ENCODE measurements at regions of chr2 and their contacts with region 1.

Region 1: GRCh38 chr2:16608661-16609643 is 56.7 kb downstream of the CYRIA start:
- DNase-seq: peak; percentile 60 to 99
- H3K4me3 ChIP-seq: peak overlapping the region; percentile 38 to 78 (median 66); a peak in 7 of 8 replicates
- H3K27ac ChIP-seq: no peak overlapping the region
- H3K4me1 ChIP-seq: no peaks in the 10 kb centered on the region; a peak in 1 of 7 replicates
- H3K27me3 ChIP-seq: no peaks in the 10 kb centered on the region
- CTCF ChIP-seq: peak; percentile 91 to 93 (median 91)
- EP300 ChIP-seq: no peak
- POLR2A ChIP-seq: no peak; a peak in 1 of 3 replicates
- RAD21 ChIP-seq: peak; percentile 93 to 95

Region 2: GRCh38 chr2:15636972-15637785 is 971.8 kb before region 1 on chr2:
- CTCF ChIA-PET with region 1: interaction called, 11 read pairs
- POLR2A ChIA-PET with region 1: no interaction called
- DNase-seq: peak; percentile 31 to 80
- H3K4me3 ChIP-seq: no peak overlapping the region
- H3K27ac ChIP-seq: no peak overlapping the region
- H3K4me1 ChIP-seq: no peaks in the 10 kb centered on the region; a peak in 1 of 7 replicates
- H3K27me3 ChIP-seq: no peaks in the 10 kb centered on the region
- CTCF ChIP-seq: peak; percentile 68 to 99 (median 92)
- EP300 ChIP-seq: no peak
- POLR2A ChIP-seq: 0 out of 3 replicates have a peak, but pooled peaks of 1 of the 2 experiments have one; percentile 26
- RAD21 ChIP-seq: peak; percentile 100

Region 3: GRCh38 chr2:16413285-16413684 is 195.7 kb before region 1 on chr2:
- CTCF ChIA-PET with region 1: no interaction called
- POLR2A ChIA-PET with region 1: no interaction called
- DNase-seq: no peak
- H3K4me3 ChIP-seq: no peak overlapping the region
- H3K27ac ChIP-seq: no peak overlapping the region
- H3K4me1 ChIP-seq: no peaks in the 10 kb centered on the region
- H3K27me3 ChIP-seq: peaks cover 0 to 1% (median 0%) of the 10 kb centered on the region in 4 experiments; a peak in 1 of 7 replicates
- CTCF ChIP-seq: no peak
- EP300 ChIP-seq: no peak
- POLR2A ChIP-seq: no peak
- RAD21 ChIP-seq: no peak

Region 4: GRCh38 chr2:16537347-16537746 is 71.6 kb before region 1 on chr2:
- CTCF ChIA-PET with region 1: interaction called, 14 read pairs
- POLR2A ChIA-PET with region 1: no interaction called
- DNase-seq: no peak
- H3K4me3 ChIP-seq: no peak overlapping the region
- H3K27ac ChIP-seq: no peak overlapping the region
- H3K4me1 ChIP-seq: no peaks in the 10 kb centered on the region
- H3K27me3 ChIP-seq: no peaks in the 10 kb centered on the region
- CTCF ChIP-seq: no peak
- EP300 ChIP-seq: no peak
- POLR2A ChIP-seq: no peak
- RAD21 ChIP-seq: no peak

Region 5: DNA sequence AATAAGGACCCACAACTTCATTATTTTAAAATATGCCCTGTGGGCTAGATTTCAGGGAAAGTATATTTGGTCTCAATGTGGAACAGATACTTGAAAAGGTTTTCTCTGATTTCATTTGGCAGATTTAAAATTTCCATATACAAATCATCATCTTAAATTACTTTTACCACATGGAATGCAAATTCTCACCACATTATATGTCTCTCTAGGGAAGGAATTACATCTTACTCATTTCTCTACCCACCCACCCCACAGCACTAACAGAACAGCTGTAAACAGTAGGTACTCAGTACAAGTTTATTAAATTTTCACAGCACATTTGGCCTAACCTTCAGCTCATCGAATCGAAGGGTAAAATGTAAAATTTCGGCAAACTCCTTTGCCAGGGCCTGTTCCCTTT is 47.3 kb before region 1 on chr2:
- CTCF ChIA-PET with region 1: interaction called, 91 read pairs
- POLR2A ChIA-PET with region 1: no interaction called
- DNase-seq: no peak
- H3K4me3 ChIP-seq: no peak overlapping the region
- H3K27ac ChIP-seq: no peak overlapping the region
- H3K4me1 ChIP-seq: peaks cover 0 to 3% (median 0%) of the 10 kb centered on the region in 4 experiments; a peak in 1 of 7 replicates
- H3K27me3 ChIP-seq: no peaks in the 10 kb centered on the region
- CTCF ChIP-seq: no peak
- EP300 ChIP-seq: no peak
- POLR2A ChIP-seq: no peak
- RAD21 ChIP-seq: no peak

Region 6: DNA sequence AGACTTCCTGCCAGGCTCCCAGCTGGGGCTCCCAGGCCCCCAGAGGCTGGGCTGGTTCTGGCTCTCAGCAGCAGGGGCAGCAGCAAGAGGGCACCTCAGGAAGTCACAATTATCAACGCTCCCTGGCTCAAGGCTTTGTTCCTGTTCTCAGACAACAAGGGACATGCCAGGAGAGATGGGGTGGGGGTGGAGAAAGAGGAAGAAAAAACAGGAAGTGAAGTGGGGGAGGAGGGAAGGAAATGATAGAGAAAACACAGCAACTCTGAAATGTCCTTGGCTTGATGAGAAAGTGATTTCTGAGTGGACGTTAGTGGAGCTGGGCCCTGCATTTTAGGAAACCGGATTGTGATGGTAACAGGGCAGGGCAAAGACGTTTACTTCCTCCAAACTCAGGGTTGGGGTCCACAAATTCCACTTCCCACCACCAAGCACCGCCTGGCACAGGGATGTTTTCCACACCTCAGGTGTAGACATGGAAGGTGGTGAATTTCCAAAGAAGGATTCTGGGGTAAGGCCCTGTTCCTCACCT is 16.3 kb after region 1 on chr2:
- CTCF ChIA-PET with region 1: interaction called, 50 read pairs
- POLR2A ChIA-PET with region 1: no interaction called
- DNase-seq: no peak
- H3K4me3 ChIP-seq: no peak overlapping the region
- H3K27ac ChIP-seq: no peak overlapping the region
- H3K4me1 ChIP-seq: peaks cover 0 to 6% (median 4%) of the 10 kb centered on the region in 4 experiments; a peak in 5 of 7 replicates
- H3K27me3 ChIP-seq: no peaks in the 10 kb centered on the region
- CTCF ChIP-seq: no peak
- EP300 ChIP-seq: no peak
- POLR2A ChIP-seq: no peak
- RAD21 ChIP-seq: no peak

Region 7: DNA sequence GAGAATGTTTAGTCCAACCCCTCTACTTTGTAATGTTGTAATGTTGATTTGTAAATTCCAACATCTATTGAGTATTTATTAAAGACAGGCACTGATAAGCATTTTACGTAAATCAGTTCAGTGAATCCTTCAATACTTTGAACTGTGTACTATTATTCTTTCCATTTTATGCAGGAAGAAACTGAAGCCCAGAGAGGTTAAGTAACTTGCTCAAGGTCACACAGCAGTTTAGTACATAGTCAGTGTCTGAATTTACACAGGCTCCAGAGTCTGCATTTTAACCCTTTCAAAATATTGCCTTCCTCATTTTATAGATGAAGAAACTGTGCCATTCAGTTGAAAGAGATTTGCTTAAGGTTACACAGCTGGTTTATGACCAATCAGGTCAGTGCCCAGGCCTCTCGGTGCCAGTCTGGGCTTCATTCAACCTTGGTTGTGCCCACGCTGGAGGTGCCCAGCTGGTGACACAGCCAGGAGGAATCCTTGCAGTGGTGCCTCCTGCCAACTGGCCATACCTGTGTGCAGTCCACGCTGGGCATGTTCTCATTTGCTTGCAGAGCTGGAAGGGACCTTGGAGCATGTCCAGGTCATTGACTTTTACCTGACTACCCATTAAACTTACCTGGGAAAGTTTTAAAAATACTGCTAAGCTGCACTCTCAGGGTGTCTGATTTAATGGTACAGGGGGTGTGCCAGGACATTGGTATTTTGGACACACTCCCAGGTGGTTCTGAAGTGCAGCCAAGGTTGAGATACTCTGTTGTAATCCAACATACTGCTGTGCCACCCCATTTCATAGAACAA is 131.0 kb after region 1 on chr2:
- CTCF ChIA-PET with region 1: interaction called, 22 read pairs
- POLR2A ChIA-PET with region 1: no interaction called
- DNase-seq: no peak
- H3K4me3 ChIP-seq: no peak overlapping the region
- H3K27ac ChIP-seq: no peak overlapping the region
- H3K4me1 ChIP-seq: no peaks in the 10 kb centered on the region
- H3K27me3 ChIP-seq: no peaks in the 10 kb centered on the region
- CTCF ChIP-seq: no peak
- EP300 ChIP-seq: no peak
- POLR2A ChIP-seq: no peak
- RAD21 ChIP-seq: no peak

Measured in H1 (cell line).